OCI-LY7 (cell line): ENCODE measurements at regions of chr7 and their contacts with region 1.

Region 1: GRCh38 chr7:49791088-49791741 is 17.8 kb downstream of the VWC2 start:
- DNase-seq: peak; percentile 91
- H3K4me3 ChIP-seq: no peak overlapping the region
- H3K27ac ChIP-seq: peak overlapping the region; percentile 55
- H3K4me1 ChIP-seq: peaks cover 25% of the 10 kb centered on the region
- CTCF ChIP-seq: peak; percentile 96

Region 2: GRCh38 chr7:48424731-48425130 is 1366.5 kb before region 1 on chr7:
- CTCF ChIA-PET with region 1: no interaction called
- POLR2A ChIA-PET with region 1: no interaction called
- intact Hi-C with region 1: loop called (anchors 5 kb)
- DNase-seq: peak; percentile 57
- H3K4me3 ChIP-seq: no peak overlapping the region
- H3K27ac ChIP-seq: no peak overlapping the region
- H3K4me1 ChIP-seq: peaks cover 28% of the 10 kb centered on the region
- CTCF ChIP-seq: peak; percentile 81

Region 3: DNA sequence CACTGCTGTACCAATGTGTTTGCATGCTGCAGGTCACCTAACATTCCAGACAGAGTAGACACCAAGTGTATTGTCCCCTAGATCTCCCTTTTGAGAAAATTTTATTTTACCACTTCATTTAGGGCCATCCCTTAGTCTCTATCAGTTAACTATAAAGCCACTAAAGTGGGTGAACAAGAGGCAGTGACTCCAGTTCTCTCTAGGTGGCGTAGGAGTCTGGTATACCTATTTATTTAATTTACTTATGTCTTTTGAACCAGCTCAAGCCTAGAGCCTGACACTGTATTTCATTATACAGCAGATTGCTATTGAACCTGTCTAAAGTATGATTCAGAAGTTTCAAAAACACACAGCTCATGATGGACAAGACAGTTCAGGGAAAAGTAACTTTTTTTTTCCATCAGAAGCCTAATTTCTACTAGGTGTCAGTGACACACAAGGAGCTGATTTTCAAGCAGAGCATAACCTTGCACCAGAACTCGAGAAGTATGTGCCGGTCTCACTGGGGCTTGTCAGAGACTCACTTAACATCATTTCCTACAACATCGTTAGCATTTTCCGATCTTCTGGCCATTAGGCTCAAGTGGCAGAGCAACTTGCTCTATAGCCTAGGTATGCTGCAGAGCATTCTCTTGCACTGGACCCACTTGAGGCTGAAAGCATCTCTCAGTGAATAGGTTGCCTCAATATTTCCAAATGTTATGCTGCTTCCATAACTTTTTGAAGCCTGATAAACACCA is 691.5 kb before region 1 on chr7:
- CTCF ChIA-PET with region 1: interaction called, 5 read pairs
- POLR2A ChIA-PET with region 1: no interaction called
- intact Hi-C with region 1: loop called (anchors 1 kb)
- DNase-seq: peak; percentile 61
- H3K4me3 ChIP-seq: no peak overlapping the region
- H3K27ac ChIP-seq: no peak overlapping the region
- H3K4me1 ChIP-seq: no peaks in the 10 kb centered on the region
- CTCF ChIP-seq: peak; percentile 81

Region 4: GRCh38 chr7:49333180-49333881 is 457.9 kb before region 1 on chr7:
- CTCF ChIA-PET with region 1: interaction called, 3 read pairs
- POLR2A ChIA-PET with region 1: interaction called, 3 read pairs
- intact Hi-C with region 1: loop called (anchors 2 kb)
- DNase-seq: peak; percentile 94
- H3K4me3 ChIP-seq: peak overlapping the region; percentile 45
- H3K27ac ChIP-seq: peak overlapping the region; percentile 100
- H3K4me1 ChIP-seq: peaks cover 58% of the 10 kb centered on the region
- CTCF ChIP-seq: no peak

Region 5: GRCh38 chr7:49579408-49580399 is 211.5 kb before region 1 on chr7:
- CTCF ChIA-PET with region 1: no interaction called
- POLR2A ChIA-PET with region 1: interaction called, 4 read pairs
- intact Hi-C with region 1: loop called (anchors 5 kb)
- DNase-seq: no peak
- H3K4me3 ChIP-seq: no peak overlapping the region
- H3K27ac ChIP-seq: no peak overlapping the region
- H3K4me1 ChIP-seq: peaks cover 41% of the 10 kb centered on the region
- CTCF ChIP-seq: no peak

Region 6: GRCh38 chr7:49692516-49692915 is 98.7 kb before region 1 on chr7:
- CTCF ChIA-PET with region 1: no interaction called
- POLR2A ChIA-PET with region 1: interaction called, 3 read pairs
- intact Hi-C with region 1: loop called (anchors 5 kb)
- DNase-seq: peak; percentile 25
- H3K4me3 ChIP-seq: peak overlapping the region; percentile 8
- H3K27ac ChIP-seq: no peak overlapping the region
- H3K4me1 ChIP-seq: peaks cover 22% of the 10 kb centered on the region
- CTCF ChIP-seq: no peak